Naive thymus-derived CD4-positive, alpha-beta T cell (primary cell): ENCODE measurements at regions of chr11 and their contacts with region 1.

Region 1: DNA sequence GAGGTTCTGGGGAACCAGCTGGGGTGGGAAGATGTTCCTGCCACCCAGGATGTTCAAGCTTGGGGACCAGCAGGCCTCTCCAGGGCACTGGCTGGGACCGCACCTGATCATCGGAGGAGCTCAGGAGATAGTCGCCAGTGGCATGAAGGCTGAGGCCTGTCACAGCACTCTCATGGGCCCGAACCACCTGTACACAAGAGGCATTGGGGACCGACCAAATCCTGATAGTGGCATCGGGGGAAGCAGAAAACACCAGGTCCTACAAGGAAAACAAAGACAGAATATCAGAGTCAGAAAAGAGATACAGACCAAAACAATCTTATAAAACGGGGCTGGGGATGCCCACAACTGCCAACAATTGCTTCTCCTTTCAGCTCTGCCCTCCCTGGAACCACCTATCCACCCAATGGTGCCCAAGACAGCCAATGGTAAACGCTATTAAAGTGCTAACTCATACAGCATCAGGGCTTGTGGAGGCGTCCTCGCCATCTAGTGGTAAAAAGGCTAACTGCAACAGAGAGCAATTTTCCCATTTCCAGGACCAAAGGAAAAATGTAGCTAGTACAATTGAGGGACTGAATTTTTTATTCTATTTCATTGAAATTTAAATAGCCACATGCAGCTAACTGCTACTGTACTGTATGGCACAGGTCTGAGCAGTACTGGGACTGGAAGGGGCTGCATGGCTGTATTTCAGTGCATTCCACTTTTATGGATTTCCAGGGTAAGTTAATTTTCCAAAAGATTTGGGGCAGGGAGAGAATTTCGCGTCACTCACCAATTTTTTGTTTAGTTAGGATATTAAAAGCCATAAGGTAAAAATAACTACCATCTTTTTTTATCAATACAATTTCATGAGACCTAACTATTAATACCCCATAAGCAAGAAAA is 7.1 kb downstream of the PRPF19 start:
- DNase-seq: peak in 7 of 9 donors; percentile 11 to 56 (median 37)
- ATAC-seq: peak; percentile 95
- H3K4me3 ChIP-seq: no peak overlapping the region
- H3K4me3 Mint-ChIP-seq: no peak overlapping the region
- H3K27ac ChIP-seq: no peak overlapping the region
- H3K27ac Mint-ChIP-seq: peak overlapping the region in 3 of 9 donors; percentile 16 to 51 (median 38)
- H3K4me1 ChIP-seq: peaks cover 0 to 3% of the 10 kb centered on the region in 2 donors
- H3K4me1 Mint-ChIP-seq: peaks cover 10 to 25% (median 20%) of the 10 kb centered on the region in 7 donors
- H3K27me3 ChIP-seq: no peaks in the 10 kb centered on the region
- H3K27me3 Mint-ChIP-seq: no peaks in the 10 kb centered on the region

Region 2: DNA sequence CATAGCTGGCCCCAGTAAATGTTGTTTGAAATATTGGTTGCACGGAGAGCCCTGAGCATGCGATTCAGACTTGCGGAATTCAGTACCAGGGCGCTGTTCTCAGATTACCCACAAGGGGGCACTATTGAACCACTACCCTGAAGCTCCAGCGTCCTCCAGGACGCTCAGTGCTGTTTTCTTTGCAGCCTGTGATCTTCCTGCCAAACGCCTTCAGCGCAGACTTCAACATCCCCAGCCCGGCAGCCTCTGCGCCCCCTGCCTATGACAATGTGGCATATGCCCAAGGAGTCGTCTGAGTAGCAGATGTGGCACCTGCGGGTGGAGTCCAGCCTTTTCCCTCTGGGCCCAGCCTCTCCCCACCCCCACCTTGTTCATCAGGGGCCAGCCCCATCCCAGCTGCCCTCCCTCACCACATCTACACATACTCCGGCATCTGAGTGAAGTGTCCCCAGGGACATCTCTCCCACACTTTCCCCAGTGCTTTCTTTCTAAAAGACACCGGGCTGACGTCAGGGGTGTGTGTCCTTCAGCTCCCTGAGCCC is 123.8 kb before region 1 on chr11:
- CTCF ChIA-PET with region 1: no interaction called
- POLR2A ChIA-PET with region 1: no interaction called
- intact Hi-C with region 1: loop called in 1 of 2 experiments (anchors 5 kb)
- DNase-seq: peak; percentile 62 to 90 (median 86)
- ATAC-seq: peak; percentile 99
- H3K4me3 ChIP-seq: no peak overlapping the region
- H3K4me3 Mint-ChIP-seq: peak overlapping the region in 3 of 10 donors; percentile 8 to 58 (median 48)
- H3K27ac ChIP-seq: no peak overlapping the region
- H3K27ac Mint-ChIP-seq: peak overlapping the region in 5 of 9 donors; percentile 4 to 78 (median 14)
- H3K4me1 ChIP-seq: no peaks in the 10 kb centered on the region
- H3K4me1 Mint-ChIP-seq: peaks cover 4 to 14% (median 10%) of the 10 kb centered on the region in 7 donors
- H3K27me3 ChIP-seq: no peaks in the 10 kb centered on the region
- H3K27me3 Mint-ChIP-seq: peaks cover 0 to 6% (median 0%) of the 10 kb centered on the region in 5 donors

Region 3: DNA sequence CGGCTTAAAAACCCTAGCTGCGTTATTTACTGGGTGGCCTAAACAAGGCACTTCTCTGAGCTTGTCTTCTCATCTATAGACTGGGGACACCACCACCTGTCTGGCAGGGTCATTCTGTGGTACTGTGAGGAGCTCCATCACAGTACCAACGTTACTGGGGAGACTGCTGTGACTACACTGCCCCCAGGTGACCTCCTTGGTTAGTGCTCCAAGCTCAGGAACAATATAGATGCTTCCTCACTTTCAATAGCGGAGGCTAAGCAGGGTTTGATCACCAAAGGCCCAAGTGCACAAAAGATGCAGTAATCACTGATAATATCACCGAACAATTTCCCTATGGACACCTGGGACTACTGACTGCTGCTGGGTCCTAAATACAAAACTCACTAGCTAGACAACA is 11.7 kb before region 1 on chr11:
- CTCF ChIA-PET with region 1: interaction called, 13 read pairs
- POLR2A ChIA-PET with region 1: interaction called, 8 read pairs
- intact Hi-C with region 1: no loop called
- DNase-seq: peak in 2 of 9 donors; percentile 14 to 24
- ATAC-seq: peak; percentile 87
- H3K4me3 ChIP-seq: no peak overlapping the region
- H3K4me3 Mint-ChIP-seq: no peak overlapping the region
- H3K27ac ChIP-seq: no peak overlapping the region
- H3K27ac Mint-ChIP-seq: no peak overlapping the region
- H3K4me1 ChIP-seq: no peaks in the 10 kb centered on the region
- H3K4me1 Mint-ChIP-seq: peaks cover 0 to 9% (median 7%) of the 10 kb centered on the region in 7 donors
- H3K27me3 ChIP-seq: no peaks in the 10 kb centered on the region
- H3K27me3 Mint-ChIP-seq: no peaks in the 10 kb centered on the region

Region 4: DNA sequence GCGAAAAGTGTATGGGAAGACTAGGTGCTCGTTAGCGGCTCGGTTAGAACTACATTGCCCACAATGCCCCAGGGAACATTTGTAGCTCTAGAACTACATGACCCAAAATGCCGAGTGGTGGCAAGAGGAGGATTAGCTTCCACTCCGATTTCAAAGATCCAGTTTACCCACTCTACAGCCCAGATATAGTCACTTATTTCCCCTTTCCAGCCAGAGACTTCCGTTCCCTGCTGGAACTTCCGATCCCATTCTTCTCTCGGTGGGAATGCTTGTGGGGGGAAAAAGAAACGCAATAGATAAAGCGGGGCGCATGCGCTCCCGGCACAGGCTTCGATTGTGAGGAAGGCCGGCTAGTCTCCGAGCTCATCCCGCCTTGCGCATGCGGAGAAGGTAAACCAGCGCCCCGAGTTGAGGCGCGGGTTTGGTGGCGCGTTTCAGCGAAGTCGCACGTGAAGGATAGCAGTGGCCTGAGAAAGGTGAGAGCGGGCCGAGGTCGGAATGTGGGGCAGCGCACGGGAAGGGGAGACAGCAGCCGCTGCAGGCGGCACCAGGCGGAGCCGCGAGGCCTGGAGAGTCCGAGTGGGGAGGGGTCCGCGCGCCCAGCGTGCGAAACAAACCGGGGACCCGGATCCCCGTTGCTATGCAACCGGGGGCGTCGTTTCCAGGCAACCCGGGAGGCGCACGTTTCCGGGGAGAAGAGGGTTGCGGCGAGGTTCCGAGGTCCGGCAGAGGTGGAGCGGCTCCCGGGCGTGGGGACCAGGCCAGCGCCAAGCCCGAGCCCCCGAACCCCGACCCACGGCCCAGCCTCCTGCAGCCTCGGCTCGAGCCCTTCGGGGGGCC is 14.7 kb after region 1 on chr11 and contains the start of gene TMEM109:
- CTCF ChIA-PET with region 1: interaction called, 15 read pairs
- POLR2A ChIA-PET with region 1: interaction called, 64 read pairs
- intact Hi-C with region 1: loop called in 1 of 2 experiments (anchors 2 kb)
- DNase-seq: peak; percentile 77 to 93 (median 91)
- ATAC-seq: peak; percentile 76
- H3K4me3 ChIP-seq: peak within 1 kb of the TSS; percentile 94
- H3K4me3 Mint-ChIP-seq: peak within 1 kb of the TSS; percentile 91 to 99 (median 98)
- H3K27ac ChIP-seq: peak within 1 kb of the TSS; percentile 94
- H3K27ac Mint-ChIP-seq: peak within 1 kb of the TSS; percentile 91 to 99 (median 97)
- H3K4me1 ChIP-seq: peaks cover 43 to 45% of the 10 kb centered on the region in 2 donors
- H3K4me1 Mint-ChIP-seq: peaks cover 39 to 77% (median 60%) of the 10 kb centered on the region in 7 donors
- H3K27me3 ChIP-seq: no peaks in the 10 kb centered on the region
- H3K27me3 Mint-ChIP-seq: peaks cover 0 to 11% (median 0%) of the 10 kb centered on the region in 5 donors
- total RNA-seq, gene TMEM109: 49.8 to 99.8 (median 56.9) TPM

Region 5: GRCh38 chr11:61049859-61050258 is 150.6 kb after region 1 on chr11:
- CTCF ChIA-PET with region 1: no interaction called
- POLR2A ChIA-PET with region 1: no interaction called
- intact Hi-C with region 1: no loop called
- DNase-seq: no peak
- ATAC-seq: no peak
- H3K4me3 ChIP-seq: no peak overlapping the region
- H3K4me3 Mint-ChIP-seq: peak overlapping the region in 4 of 10 donors; percentile 18 to 51 (median 34)
- H3K27ac ChIP-seq: no peak overlapping the region
- H3K27ac Mint-ChIP-seq: peak overlapping the region in 8 of 9 donors; percentile 10 to 90 (median 76)
- H3K4me1 ChIP-seq: peaks cover 0 to 37% of the 10 kb centered on the region in 2 donors
- H3K4me1 Mint-ChIP-seq: peaks cover 28 to 75% (median 69%) of the 10 kb centered on the region in 7 donors
- H3K27me3 ChIP-seq: no peaks in the 10 kb centered on the region
- H3K27me3 Mint-ChIP-seq: no peaks in the 10 kb centered on the region